Panc1 (cell line): ENCODE measurements at regions of chr11 and their contacts with region 1.

Region 1: GRCh38 chr11:61254403-61255025 is 13.5 kb downstream of the PGA5 start:
- DNase-seq: peak; percentile 56
- ATAC-seq: peak; percentile 94
- H3K4me3 ChIP-seq: no peak overlapping the region
- H3K27ac ChIP-seq: no peak overlapping the region
- H3K4me1 ChIP-seq: no peaks in the 10 kb centered on the region
- H3K27me3 ChIP-seq: no peaks in the 10 kb centered on the region
- CTCF ChIP-seq: peak; percentile 94

Region 2: GRCh38 chr11:61152816-61153592 is 101.5 kb before region 1 on chr11:
- CTCF ChIA-PET with region 1: interaction called, 19 read pairs
- POLR2A ChIA-PET with region 1: no interaction called
- in situ Hi-C with region 1: no loop called
- intact Hi-C with region 1: no loop called
- DNase-seq: no peak
- ATAC-seq: peak; percentile 71
- H3K4me3 ChIP-seq: no peak overlapping the region
- H3K27ac ChIP-seq: peak overlapping the region; percentile 20
- H3K4me1 ChIP-seq: peaks cover 27% of the 10 kb centered on the region
- H3K27me3 ChIP-seq: no peaks in the 10 kb centered on the region
- CTCF ChIP-seq: no peak

Region 3: DNA sequence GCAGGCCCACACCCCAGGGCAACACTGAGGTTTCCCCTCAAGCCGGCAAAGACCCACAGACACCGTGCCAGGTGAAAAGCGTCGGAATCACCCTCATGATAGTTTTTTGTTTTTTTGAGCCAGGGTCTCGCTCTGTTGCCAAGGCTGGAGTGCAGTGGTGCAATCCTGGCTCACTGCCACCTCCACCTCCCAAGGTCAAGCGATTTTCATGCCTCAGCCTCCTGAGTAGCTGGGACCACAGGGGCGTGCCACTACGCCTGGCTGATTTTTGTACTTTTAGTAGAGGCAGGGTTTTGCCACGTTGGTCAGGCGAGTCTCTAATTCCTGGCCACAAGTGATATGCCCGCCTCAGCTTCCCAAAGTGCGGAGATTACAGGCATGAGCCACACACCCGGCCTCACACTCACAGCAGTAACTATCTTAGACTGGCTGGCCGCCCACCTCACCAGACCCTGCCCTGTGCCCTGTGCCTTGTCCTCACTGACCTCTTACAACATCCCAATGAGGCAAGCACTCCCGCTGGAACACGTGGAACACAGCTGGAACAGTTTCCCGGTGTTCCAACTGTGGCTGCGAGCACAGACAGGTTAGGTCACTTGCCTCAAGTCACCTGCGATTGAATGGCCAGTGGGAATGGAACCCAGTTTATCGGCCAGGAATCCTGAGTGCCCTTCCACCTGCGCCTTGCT is 275.2 kb after region 1 on chr11:
- CTCF ChIA-PET with region 1: no interaction called
- POLR2A ChIA-PET with region 1: no interaction called
- in situ Hi-C with region 1: no loop called
- intact Hi-C with region 1: no loop called
- DNase-seq: no peak
- ATAC-seq: no peak
- H3K4me3 ChIP-seq: no peak overlapping the region
- H3K27ac ChIP-seq: no peak overlapping the region
- H3K4me1 ChIP-seq: no peaks in the 10 kb centered on the region
- H3K27me3 ChIP-seq: no peaks in the 10 kb centered on the region
- CTCF ChIP-seq: no peak